Ascending aorta (tissue), 2 donors: ENCODE measurements at regions of chr19 and their contacts with region 1.

Region 1: GRCh38 chr19:5128251-5128935 is 159.5 kb downstream of the KDM4B start:
- DNase-seq: peak in 1 of 2 donors; percentile 79
- H3K4me3 ChIP-seq: peak overlapping the region; percentile 20 to 33
- H3K27ac ChIP-seq: peak overlapping the region; percentile 28 to 69
- H3K4me1 ChIP-seq: peaks cover 5 to 31% of the 10 kb centered on the region in 2 donors
- H3K27me3 ChIP-seq: no peaks in the 10 kb centered on the region
- CTCF ChIP-seq: no peak

Region 2: DNA sequence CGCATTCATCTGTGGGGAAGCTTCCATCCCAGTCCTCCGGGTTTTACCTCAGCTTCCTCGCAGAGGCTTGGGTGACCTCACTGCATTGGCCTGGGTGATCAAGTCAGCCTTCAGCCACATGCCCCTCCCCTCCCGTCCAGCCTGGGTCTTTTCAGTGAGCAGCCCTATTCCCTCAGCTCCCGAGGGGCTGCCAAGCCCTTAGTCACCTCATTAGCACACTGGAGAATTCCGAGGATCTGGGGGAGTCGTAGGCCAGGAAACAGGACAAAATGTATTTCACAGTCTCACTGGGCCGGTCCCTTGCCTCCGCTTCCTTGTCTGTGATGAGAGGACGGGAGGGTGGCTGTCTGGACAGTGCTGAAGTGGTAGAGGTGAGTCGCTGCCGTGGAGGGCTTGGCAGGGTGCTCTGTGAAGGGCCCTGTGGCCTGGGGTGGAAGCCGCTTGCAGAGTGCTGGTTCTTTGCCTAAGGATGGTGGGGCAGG is 139.6 kb before region 1 on chr19:
- intact Hi-C with region 1: no loop called
- DNase-seq: peak; percentile 66 to 92
- H3K4me3 ChIP-seq: peak overlapping the region in 1 of 2 donors; percentile 30
- H3K27ac ChIP-seq: peak overlapping the region; percentile 28 to 71
- H3K4me1 ChIP-seq: peaks cover 0 to 14% of the 10 kb centered on the region in 2 donors
- H3K27me3 ChIP-seq: no peaks in the 10 kb centered on the region
- CTCF ChIP-seq: no peak

Region 3: GRCh38 chr19:5048091-5048726 is 80.2 kb before region 1 on chr19:
- intact Hi-C with region 1: loop called (anchors 5 kb)
- DNase-seq: peak; percentile 13 to 89
- H3K4me3 ChIP-seq: peak overlapping the region; percentile 31 to 44
- H3K27ac ChIP-seq: peak overlapping the region in 1 of 2 donors; percentile 53
- H3K4me1 ChIP-seq: peaks cover 22 to 30% of the 10 kb centered on the region in 2 donors
- H3K27me3 ChIP-seq: no peaks in the 10 kb centered on the region
- CTCF ChIP-seq: peak; percentile 97 to 99 (median 99)

Region 4: DNA sequence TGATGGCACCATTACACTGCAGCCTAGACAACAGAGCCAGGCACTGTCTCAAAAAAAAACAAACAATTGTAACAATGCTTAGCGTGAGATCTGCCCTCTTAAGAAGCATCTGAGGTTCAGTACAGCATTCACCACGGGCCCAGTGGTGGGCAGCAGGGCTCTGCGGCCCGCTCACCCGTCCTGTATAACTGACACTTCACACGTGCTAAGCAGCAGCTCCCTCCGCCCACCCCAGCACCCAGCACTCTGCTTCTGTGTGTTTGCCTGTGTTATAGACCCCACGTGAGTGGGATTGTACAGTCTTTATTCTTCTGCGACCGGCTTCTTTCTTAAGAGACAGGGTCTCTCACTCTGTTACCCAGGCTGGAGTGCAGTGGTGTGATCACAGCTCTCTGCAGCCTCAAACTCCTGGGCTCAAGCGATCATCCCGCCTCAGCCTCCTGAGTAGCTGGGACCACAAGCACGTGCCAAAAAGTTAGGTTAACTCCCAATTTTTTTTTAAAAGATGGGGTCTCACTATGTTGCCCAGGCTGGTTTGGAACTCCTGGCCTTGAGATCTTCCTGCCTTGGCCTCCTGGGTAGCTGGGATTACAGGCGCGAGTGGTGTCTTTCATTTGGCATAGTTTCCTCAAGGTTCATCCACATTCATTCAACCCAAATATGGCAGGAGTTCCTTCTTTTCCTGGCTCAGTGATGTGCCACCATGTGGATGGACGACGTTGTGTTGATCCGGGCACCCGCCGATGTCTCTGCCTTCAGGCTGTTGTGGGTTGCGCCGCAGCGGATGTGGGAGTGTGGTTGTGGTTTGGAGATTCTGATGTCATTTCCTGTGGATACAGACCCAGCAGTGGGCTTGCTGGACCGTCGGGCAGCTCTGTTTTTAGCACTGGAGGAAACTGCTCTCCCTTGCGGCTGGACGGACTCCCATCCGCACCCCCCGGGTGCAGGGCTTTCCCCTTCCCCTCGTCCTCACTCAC is 10.5 kb after region 1 on chr19:
- intact Hi-C with region 1: no loop called
- DNase-seq: peak in 1 of 2 donors; percentile 76
- H3K4me3 ChIP-seq: no peak overlapping the region
- H3K27ac ChIP-seq: no peak overlapping the region
- H3K4me1 ChIP-seq: no peaks in the 10 kb centered on the region
- H3K27me3 ChIP-seq: no peaks in the 10 kb centered on the region
- CTCF ChIP-seq: no peak

Region 5: GRCh38 chr19:5172859-5173577 is 44.6 kb after region 1 on chr19:
- intact Hi-C with region 1: loop called (anchors 1 kb)
- DNase-seq: peak in 1 of 2 donors; percentile 79
- H3K4me3 ChIP-seq: no peak overlapping the region
- H3K27ac ChIP-seq: peak overlapping the region in 1 of 2 donors; percentile 18
- H3K4me1 ChIP-seq: no peaks in the 10 kb centered on the region
- H3K27me3 ChIP-seq: no peaks in the 10 kb centered on the region
- CTCF ChIP-seq: no peak